ENCODE measurements at regions of chr14 and their contacts with region 1.

Region 1: GRCh38 chr14:22836301-22837113 is at the start of gene MMP14:
- DNase-seq: peak; percentile 78
- H3K4me3 Mint-ChIP-seq: peak within 1 kb of the TSS; percentile 99
- H3K27ac Mint-ChIP-seq: peak within 1 kb of the TSS; percentile 98
- H3K4me1 Mint-ChIP-seq: peaks cover 21% of the 10 kb centered on the region
- H3K27me3 Mint-ChIP-seq: no peaks in the 10 kb centered on the region
- CTCF ChIP-seq: no peak
- total RNA-seq, gene MMP14: 71.5 and 78.6 TPM in 2 replicates

Region 2: GRCh38 chr14:22634233-22634900 is 202.1 kb before region 1 on chr14:
- CTCF ChIA-PET with region 1: no interaction called
- POLR2A ChIA-PET with region 1: no interaction called
- intact Hi-C with region 1: no loop called
- DNase-seq: no peak
- H3K4me3 Mint-ChIP-seq: no peak overlapping the region
- H3K27ac Mint-ChIP-seq: no peak overlapping the region
- H3K4me1 Mint-ChIP-seq: no peaks in the 10 kb centered on the region
- H3K27me3 Mint-ChIP-seq: peaks cover 41% of the 10 kb centered on the region
- CTCF ChIP-seq: no peak

Region 3: DNA sequence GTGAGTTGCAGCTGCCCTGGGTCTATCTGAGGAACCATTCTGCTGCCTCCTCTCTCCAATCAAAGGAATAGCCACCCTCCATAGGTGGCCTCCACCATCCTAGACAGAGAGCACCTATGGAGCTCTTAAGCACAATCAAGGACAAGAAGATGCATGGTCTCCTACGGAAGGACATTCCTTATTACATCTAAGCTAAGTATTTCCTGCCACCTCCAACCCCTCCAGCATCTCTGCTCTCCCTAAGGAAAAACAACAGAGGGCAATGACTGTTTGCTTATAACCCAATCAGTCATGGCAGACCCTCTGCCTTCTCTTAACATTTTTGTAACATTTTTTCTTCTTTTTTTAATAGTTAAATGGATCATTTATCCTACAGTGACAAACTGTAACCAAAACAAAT is 177.6 kb before region 1 on chr14:
- CTCF ChIA-PET with region 1: interaction called, 10 read pairs
- POLR2A ChIA-PET with region 1: interaction called, 5 read pairs
- intact Hi-C with region 1: no loop called
- DNase-seq: no peak
- H3K4me3 Mint-ChIP-seq: no peak overlapping the region
- H3K27ac Mint-ChIP-seq: no peak overlapping the region
- H3K4me1 Mint-ChIP-seq: no peaks in the 10 kb centered on the region
- H3K27me3 Mint-ChIP-seq: no peaks in the 10 kb centered on the region
- CTCF ChIP-seq: no peak

Region 4: GRCh38 chr14:22671622-22672021 is 164.9 kb before region 1 on chr14:
- CTCF ChIA-PET with region 1: no interaction called
- POLR2A ChIA-PET with region 1: no interaction called
- intact Hi-C with region 1: no loop called
- DNase-seq: no peak
- H3K4me3 Mint-ChIP-seq: no peak overlapping the region
- H3K27ac Mint-ChIP-seq: no peak overlapping the region
- H3K4me1 Mint-ChIP-seq: no peaks in the 10 kb centered on the region
- H3K27me3 Mint-ChIP-seq: peaks cover 6% of the 10 kb centered on the region
- CTCF ChIP-seq: no peak

Region 5: GRCh38 chr14:22726012-22726411 is 110.5 kb before region 1 on chr14:
- CTCF ChIA-PET with region 1: no interaction called
- POLR2A ChIA-PET with region 1: no interaction called
- intact Hi-C with region 1: no loop called
- DNase-seq: no peak
- H3K4me3 Mint-ChIP-seq: no peak overlapping the region
- H3K27ac Mint-ChIP-seq: no peak overlapping the region
- H3K4me1 Mint-ChIP-seq: no peaks in the 10 kb centered on the region
- H3K27me3 Mint-ChIP-seq: no peaks in the 10 kb centered on the region
- CTCF ChIP-seq: no peak

Region 6: DNA sequence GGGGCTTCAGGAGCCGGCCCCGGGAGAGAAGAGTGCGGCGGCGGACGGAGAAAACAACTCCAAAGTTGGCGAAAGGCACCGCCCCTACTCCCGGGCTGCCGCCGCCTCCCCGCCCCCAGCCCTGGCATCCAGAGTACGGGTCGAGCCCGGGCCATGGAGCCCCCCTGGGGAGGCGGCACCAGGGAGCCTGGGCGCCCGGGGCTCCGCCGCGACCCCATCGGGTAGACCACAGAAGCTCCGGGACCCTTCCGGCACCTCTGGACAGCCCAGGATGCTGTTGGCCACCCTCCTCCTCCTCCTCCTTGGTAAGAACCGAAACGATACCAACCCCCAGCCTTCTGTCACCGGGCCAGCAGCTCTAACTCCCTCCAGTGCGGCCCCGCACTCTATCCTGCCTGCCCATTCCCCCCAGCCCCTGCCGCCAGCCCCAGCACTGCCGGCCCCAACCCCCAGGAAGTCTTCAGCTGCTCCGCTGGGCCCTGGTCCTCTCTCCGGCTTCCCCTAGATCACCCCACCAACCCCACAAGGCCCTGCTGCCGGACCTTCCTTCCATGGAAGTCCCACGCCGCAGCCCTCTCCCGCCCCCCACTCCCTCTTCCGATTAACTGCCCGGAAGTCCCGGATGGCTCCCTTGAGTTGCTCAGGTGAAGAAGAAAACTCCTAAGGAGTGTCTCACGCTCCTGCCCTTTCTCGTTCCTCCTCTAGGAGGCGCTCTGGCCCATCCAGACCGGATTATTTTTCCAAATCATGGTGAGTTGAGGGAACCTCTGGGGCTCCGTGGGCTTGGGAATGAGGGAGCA is 35.7 kb after region 1 on chr14:
- CTCF ChIA-PET with region 1: interaction called, 23 read pairs
- POLR2A ChIA-PET with region 1: interaction called, 45 read pairs
- intact Hi-C with region 1: loop called (anchors 5 kb)
- DNase-seq: peak; percentile 90
- H3K4me3 Mint-ChIP-seq: peak overlapping the region; percentile 79
- H3K27ac Mint-ChIP-seq: peak overlapping the region; percentile 91
- H3K4me1 Mint-ChIP-seq: peaks cover 20% of the 10 kb centered on the region
- H3K27me3 Mint-ChIP-seq: no peaks in the 10 kb centered on the region
- CTCF ChIP-seq: peak; percentile 81

Region 7: DNA sequence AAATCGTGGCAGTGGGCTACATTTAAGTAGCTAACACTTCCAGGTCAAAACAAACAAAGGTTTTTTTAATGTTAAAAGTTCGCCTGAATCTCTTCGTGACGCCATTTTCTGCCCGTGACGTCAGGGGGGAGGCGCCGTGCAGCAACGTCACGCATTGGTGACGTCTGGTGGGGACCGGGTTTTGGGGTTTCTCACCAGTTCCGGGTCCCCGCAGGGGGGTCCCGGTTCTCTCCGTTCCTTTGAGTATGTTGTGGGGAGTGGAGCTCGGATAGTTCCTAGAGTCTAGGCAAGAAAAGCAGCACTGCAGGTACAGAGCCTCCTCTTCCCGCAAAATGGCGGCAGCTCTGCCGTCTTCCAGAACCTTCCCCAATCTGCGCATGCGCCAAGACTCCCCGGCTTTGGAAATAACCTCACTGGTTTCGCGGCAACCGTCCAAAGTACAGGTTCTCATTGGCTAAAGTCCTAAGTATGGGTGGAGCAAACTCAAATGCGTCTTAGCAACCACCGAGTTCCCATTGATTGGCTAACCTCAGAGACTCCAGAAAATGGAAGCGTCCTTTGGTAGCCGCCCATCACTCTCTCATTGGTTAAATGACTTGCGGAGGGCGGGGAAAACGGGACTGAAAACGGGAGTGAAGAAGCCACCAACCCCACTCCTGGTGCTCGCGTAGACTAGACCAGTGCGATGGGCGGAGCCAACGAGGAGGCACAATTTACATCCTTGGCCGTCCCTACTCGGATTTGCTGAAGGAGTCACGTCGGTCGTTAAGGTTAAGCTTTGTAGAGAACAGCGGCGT is 82.5 kb after region 1 on chr14 and contains the start of gene RBM23:
- CTCF ChIA-PET with region 1: no interaction called
- POLR2A ChIA-PET with region 1: interaction called, 24 read pairs
- intact Hi-C with region 1: no loop called
- DNase-seq: peak; percentile 100
- H3K4me3 Mint-ChIP-seq: peak within 1 kb of the TSS; percentile 87
- H3K27ac Mint-ChIP-seq: peak within 1 kb of the TSS; percentile 100
- H3K4me1 Mint-ChIP-seq: peaks cover 31% of the 10 kb centered on the region
- H3K27me3 Mint-ChIP-seq: no peaks in the 10 kb centered on the region
- CTCF ChIP-seq: no peak
- total RNA-seq, gene RBM23: 57.6 and 60.6 TPM in 2 replicates

Region 8: DNA sequence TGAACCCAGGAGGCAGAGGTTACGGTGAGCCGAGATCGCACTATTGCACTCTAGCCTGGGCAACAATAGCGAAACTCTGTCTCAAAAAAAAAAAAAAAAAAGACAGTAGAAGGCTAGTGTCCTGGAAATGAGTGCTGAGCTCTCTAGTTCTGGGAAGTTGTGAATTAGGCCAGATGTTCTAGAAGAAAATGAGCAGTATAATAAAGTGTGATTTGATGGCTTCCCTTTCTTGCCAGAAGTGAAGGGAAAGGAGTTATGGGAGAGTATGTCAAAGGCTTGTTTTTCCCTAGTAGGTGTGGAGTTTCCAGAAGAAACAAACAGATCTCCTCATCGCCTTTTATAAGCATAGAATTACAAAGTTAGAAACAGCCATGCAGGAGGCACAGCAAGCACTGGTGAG is 421.7 kb after region 1 on chr14:
- CTCF ChIA-PET with region 1: no interaction called
- POLR2A ChIA-PET with region 1: no interaction called
- intact Hi-C with region 1: no loop called
- DNase-seq: no peak
- H3K4me3 Mint-ChIP-seq: no peak overlapping the region
- H3K27ac Mint-ChIP-seq: no peak overlapping the region
- H3K4me1 Mint-ChIP-seq: no peaks in the 10 kb centered on the region
- H3K27me3 Mint-ChIP-seq: peaks cover 9% of the 10 kb centered on the region
- CTCF ChIP-seq: no peak